ENCODE measurements at regions of chrX and their contacts with region 1.

Region 1: DNA sequence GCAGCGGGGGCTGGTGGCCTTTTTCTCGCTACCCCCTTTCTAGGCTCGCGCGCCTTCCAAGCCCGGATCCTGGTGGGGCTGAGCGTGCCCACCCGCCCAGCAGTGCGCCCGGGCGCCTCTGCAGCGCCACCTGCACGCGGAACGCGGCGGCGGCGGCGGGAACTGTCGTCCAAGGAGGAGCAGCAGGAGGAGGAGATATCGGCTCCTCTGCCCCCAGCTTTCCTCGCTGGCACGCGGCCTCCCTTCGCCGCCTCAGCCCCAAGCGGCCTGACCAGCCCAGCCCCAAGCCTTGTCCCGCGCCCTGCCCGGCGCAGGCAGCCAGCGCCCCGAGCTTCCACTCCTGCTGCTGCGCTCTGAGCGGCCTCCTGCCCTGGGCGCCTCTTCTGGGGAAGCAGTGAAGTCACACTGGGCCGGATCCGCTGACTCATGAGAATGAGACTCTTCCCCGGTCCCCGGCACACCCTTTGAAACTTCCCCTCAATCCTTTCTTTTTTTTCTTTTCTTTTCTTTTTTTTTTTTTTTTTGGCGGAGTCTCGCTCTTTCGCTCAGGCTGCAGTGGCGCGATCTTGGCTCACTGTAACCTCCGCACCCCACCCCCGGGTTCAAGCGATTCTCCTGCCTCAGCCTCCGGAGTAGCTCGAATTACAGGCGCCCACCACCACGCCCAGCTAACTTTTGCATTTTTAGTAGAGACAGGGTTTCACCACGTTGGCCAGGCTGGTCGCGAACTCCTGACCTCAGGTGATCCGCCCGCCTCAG is 10.6 kb upstream of the ELF4 start:
- DNase-seq: peak; percentile 71
- ATAC-seq: peak; percentile 94
- H3K4me3 Mint-ChIP-seq: peak overlapping the region; percentile 63
- H3K27ac Mint-ChIP-seq: no peak overlapping the region
- H3K4me1 Mint-ChIP-seq: peaks cover 28% of the 10 kb centered on the region
- H3K27me3 Mint-ChIP-seq: no peaks in the 10 kb centered on the region

Region 2: DNA sequence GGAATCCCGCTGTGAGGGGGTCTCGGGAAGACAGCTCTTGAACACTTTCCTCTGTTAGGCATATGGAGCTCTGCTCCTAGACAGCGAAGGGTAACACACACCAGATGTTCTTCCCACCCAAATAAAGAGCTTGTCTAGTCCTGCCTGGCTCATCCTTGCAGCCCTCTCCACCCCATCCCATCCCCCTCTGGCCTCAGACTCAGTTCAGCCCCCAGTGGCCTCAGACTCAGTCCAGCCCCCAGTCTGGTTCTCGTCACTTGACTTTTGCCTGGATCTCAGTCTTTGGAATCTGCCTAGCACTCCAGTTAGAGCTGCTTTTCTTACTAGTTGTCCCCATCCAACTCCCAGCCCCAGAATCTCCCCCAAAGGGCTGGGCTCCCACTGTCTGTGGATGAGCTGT is 65.7 kb after region 1 on chrX:
- CTCF ChIA-PET with region 1: interaction called, 13 read pairs
- POLR2A ChIA-PET with region 1: no interaction called
- DNase-seq: no peak
- ATAC-seq: no peak
- H3K4me3 Mint-ChIP-seq: no peak overlapping the region
- H3K27ac Mint-ChIP-seq: no peak overlapping the region
- H3K4me1 Mint-ChIP-seq: peaks cover 20% of the 10 kb centered on the region
- H3K27me3 Mint-ChIP-seq: no peaks in the 10 kb centered on the region